CD8-positive, alpha-beta T cell (primary cell): ENCODE measurements at regions of chr7 and their contacts with region 1.

Region 1: GRCh38 chr7:80134536-80135320 is at the start of gene GNAI1:
- DNase-seq: peak in 6 of 9 experiments; percentile 13 to 51 (median 28)
- ATAC-seq: peak; percentile 41
- H3K4me3 ChIP-seq: peak within 1 kb of the TSS; percentile 53 to 60
- H3K4me3 Mint-ChIP-seq: peak within 1 kb of the TSS; percentile 86
- H3K27ac ChIP-seq: peak within 1 kb of the TSS in 1 of 2 experiments; percentile 17
- H3K27ac Mint-ChIP-seq: peak within 1 kb of the TSS; percentile 10
- H3K4me1 ChIP-seq: peaks cover 4% of the 10 kb centered on the region
- H3K4me1 Mint-ChIP-seq: peaks cover 19% of the 10 kb centered on the region
- H3K27me3 ChIP-seq: no peaks in the 10 kb centered on the region
- H3K27me3 Mint-ChIP-seq: peaks cover 20% of the 10 kb centered on the region
- CTCF ChIP-seq: peak; percentile 17
- total RNA-seq, gene GNAI1: 0.30 to 0.36 TPM

Region 2: GRCh38 chr7:79245623-79246249 is 889.0 kb before region 1 on chr7:
- CTCF ChIA-PET with region 1: no interaction called
- POLR2A ChIA-PET with region 1: no interaction called
- intact Hi-C with region 1: no loop called
- DNase-seq: no peak
- ATAC-seq: no peak
- H3K4me3 ChIP-seq: no peak overlapping the region
- H3K4me3 Mint-ChIP-seq: no peak overlapping the region
- H3K27ac ChIP-seq: no peak overlapping the region
- H3K27ac Mint-ChIP-seq: no peak overlapping the region
- H3K4me1 ChIP-seq: no peaks in the 10 kb centered on the region
- H3K4me1 Mint-ChIP-seq: no peaks in the 10 kb centered on the region
- H3K27me3 ChIP-seq: no peaks in the 10 kb centered on the region
- H3K27me3 Mint-ChIP-seq: no peaks in the 10 kb centered on the region
- CTCF ChIP-seq: no peak

Region 3: GRCh38 chr7:80392229-80393169 is 257.8 kb after region 1 on chr7:
- CTCF ChIA-PET with region 1: interaction called, 3 read pairs
- POLR2A ChIA-PET with region 1: no interaction called
- intact Hi-C with region 1: loop called in 1 of 2 experiments (anchors 2 kb)
- DNase-seq: peak in 1 of 9 experiments; percentile 34
- ATAC-seq: no peak
- H3K4me3 ChIP-seq: no peak overlapping the region
- H3K4me3 Mint-ChIP-seq: no peak overlapping the region
- H3K27ac ChIP-seq: no peak overlapping the region
- H3K27ac Mint-ChIP-seq: no peak overlapping the region
- H3K4me1 ChIP-seq: no peaks in the 10 kb centered on the region
- H3K4me1 Mint-ChIP-seq: no peaks in the 10 kb centered on the region
- H3K27me3 ChIP-seq: no peaks in the 10 kb centered on the region
- H3K27me3 Mint-ChIP-seq: no peaks in the 10 kb centered on the region
- CTCF ChIP-seq: peak; percentile 40